Sciatic nerve (tissue), 2 donors: ENCODE measurements at regions of chr9 and their contacts with region 1.

Region 1: DNA sequence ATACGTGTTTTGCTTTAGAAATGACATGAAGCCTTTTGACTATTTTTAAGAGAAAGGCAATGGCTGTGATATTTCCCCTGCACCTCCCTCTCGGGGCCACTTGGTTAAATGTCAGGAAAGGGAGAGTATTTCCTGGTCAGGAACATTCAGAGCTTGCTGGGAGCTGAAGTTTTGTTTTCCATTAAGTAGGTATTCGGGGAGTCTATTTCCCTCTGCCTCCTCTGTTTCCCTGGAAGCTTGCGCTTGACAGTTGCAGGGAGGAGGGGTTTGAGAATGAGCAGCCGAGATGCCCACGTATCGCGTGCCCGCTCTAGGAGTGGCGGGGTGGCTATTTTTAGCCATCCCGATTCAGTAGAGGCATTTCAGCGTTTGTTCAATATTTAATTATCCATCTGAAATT is 6.7 kb downstream of the DAB2IP start:
- DNase-seq: no peak
- ATAC-seq: no peak

Region 2: GRCh38 chr9:121160025-121160424 is 498.1 kb before region 1 on chr9:
- intact Hi-C with region 1: loop called (anchors 5 kb)
- DNase-seq: no peak
- ATAC-seq: no peak

Region 3: GRCh38 chr9:121609845-121610570 is 48.2 kb before region 1 on chr9:
- intact Hi-C with region 1: no loop called
- DNase-seq: no peak
- ATAC-seq: no peak